Activated T-helper 2 cell treated with anti-CD3 and anti-CD28 coated beads, Interferon-gamma antibody, Interleukin-2, Interleukin-4, amounts not matched to agents 10 μg/mL and 5 μg/mL and 100 μg/mL, durations not matched to agents 14 hours and 24 hours and 36 hours (primary cell): ENCODE measurements at regions of chr2 and their contacts with region 1.

Region 1: DNA sequence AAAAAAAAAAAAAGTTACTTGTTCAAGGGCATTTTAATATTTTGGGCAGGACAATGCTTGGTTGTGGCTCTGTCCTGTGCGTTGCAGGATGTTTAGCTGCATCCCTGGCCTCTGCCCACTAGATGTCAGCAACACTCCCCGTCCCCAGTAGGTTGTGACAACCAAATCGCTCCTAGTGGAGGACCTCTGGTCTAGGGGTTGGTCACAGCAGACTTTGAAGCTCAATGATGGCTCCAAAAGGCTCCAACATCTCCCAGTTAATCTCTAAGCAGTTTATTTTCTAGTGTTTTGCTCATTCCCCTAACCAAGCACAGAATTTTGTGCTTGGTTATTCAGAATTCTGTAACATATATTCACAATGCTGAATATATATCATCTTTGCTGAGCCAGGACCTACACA is 67.0 kb downstream of the CHRNA1 start:
- DNase-seq: peak; percentile 48
- H3K4me3 Mint-ChIP-seq: no peak overlapping the region
- H3K27ac Mint-ChIP-seq: no peak overlapping the region
- H3K4me1 Mint-ChIP-seq: no peaks in the 10 kb centered on the region
- H3K27me3 Mint-ChIP-seq: peaks cover 26% of the 10 kb centered on the region

Region 2: GRCh38 chr2:174771631-174772471 is 74.6 kb after region 1 on chr2:
- intact Hi-C with region 1: loop called (anchors 1 kb)
- DNase-seq: no peak
- H3K4me3 Mint-ChIP-seq: no peak overlapping the region
- H3K27ac Mint-ChIP-seq: no peak overlapping the region
- H3K4me1 Mint-ChIP-seq: peaks cover 14% of the 10 kb centered on the region
- H3K27me3 Mint-ChIP-seq: peaks cover 2% of the 10 kb centered on the region

Region 3: DNA sequence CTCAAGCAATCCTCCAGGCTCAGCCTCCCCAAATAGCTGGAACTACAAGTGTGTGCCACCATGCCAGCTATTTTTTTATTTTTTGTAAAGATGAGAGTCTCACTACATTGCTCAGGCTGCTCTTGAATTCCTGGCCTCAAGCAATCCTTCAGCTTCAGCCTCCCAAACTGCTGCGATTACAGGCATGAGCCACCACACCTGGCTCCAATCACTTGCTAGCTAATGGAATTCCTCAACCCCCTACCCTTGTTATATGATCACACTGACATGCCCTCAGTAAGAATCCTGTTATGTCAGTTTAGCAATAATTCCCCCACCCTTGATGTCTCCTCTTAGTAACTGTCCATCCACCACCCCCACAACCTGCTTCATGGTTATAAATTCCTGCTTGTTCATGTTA is 295.6 kb after region 1 on chr2:
- intact Hi-C with region 1: loop called (anchors 5 kb)
- DNase-seq: no peak
- H3K4me3 Mint-ChIP-seq: no peak overlapping the region
- H3K27ac Mint-ChIP-seq: no peak overlapping the region
- H3K4me1 Mint-ChIP-seq: peaks cover 2% of the 10 kb centered on the region
- H3K27me3 Mint-ChIP-seq: peaks cover 9% of the 10 kb centered on the region

Region 4: DNA sequence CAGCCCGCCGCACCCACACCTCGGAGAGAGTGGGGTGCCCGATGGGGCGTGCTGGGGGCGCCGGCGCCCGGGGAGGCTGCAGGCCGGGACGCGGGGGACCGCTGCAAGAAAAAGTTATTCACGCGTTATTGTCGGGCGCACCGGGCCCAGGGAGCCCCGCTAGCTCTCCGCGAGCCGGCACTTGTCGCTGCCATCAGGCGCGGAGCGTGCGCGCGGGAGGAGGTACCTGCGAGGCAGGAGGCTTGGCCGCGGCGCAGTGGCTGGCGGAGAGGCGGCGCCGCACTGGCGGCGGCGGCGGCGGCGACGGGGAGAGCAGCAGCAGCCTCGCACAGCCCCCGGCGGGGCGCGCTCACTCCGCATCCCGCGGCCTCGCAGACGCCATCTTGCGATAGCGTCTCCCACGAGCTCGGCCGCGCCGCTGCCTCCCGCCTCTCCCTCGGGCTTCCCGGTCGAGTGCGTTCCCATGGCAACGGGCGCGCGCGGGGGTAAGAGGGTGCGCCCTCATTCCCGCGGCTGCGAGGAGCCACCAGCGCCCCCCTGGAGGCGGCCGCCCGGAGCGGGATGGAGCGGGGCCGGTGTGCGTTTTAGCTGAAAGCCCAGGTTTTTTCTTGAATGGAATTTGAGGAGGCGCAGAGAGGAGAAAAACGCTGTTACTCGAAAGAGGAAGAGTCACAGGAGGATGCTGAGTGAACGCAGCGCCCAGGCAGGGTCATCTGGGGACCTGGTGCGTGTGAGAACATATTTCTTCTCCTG is 307.9 kb after region 1 on chr2 and contains the start of gene CHN1:
- intact Hi-C with region 1: loop called (anchors 5 kb)
- DNase-seq: peak; percentile 46
- H3K4me3 Mint-ChIP-seq: peak within 1 kb of the TSS; percentile 80
- H3K27ac Mint-ChIP-seq: no peak within 1 kb of the TSS
- H3K4me1 Mint-ChIP-seq: peaks cover 2% of the 10 kb centered on the region
- H3K27me3 Mint-ChIP-seq: peaks cover 69% of the 10 kb centered on the region
- total RNA-seq, gene CHN1: 5.0 and 7.3 TPM in 2 replicates

Region 5: DNA sequence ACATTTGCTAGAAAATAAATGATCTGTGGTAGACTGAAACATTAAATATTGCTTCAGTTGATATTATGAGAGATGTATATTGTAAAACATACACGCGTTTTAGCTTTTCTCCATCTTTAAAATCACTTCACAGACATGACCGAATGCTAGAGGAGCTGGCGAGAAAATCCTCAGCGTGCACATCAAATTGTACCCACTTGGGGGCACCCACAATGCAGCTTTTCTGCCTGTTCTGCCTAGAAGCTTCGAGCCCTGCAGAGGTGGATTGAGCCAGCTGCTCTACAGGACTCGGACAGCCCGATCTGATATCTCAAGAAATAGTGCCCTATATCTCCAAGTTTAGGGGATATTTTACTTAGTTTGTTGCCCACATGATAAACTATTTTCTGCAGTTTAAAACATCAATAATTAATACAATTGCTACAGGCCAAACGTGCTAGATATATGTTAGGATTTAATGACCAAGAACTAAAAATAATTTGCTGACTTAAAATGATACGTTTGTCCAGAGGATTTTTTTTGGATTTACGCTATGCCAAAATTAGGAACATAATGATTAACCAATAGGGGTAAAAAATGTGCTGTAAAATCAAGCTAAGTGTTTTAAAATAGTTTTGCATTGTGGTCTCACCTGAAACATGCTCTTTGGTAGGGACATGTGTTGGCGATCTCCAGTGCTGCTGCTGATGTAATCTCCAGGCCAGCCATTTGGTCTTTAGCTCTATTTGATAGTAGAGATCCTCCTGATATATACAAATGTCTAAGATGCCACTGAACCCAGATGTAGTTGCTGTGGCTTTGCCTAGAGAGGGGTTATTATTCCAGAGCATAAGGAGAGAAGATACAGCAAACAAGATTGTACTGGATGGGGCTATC is 506.6 kb after region 1 on chr2:
- intact Hi-C with region 1: loop called (anchors 5 kb)
- DNase-seq: peak; percentile 22
- H3K4me3 Mint-ChIP-seq: no peak overlapping the region
- H3K27ac Mint-ChIP-seq: no peak overlapping the region
- H3K4me1 Mint-ChIP-seq: peaks cover 8% of the 10 kb centered on the region
- H3K27me3 Mint-ChIP-seq: peaks cover 13% of the 10 kb centered on the region

Region 6: DNA sequence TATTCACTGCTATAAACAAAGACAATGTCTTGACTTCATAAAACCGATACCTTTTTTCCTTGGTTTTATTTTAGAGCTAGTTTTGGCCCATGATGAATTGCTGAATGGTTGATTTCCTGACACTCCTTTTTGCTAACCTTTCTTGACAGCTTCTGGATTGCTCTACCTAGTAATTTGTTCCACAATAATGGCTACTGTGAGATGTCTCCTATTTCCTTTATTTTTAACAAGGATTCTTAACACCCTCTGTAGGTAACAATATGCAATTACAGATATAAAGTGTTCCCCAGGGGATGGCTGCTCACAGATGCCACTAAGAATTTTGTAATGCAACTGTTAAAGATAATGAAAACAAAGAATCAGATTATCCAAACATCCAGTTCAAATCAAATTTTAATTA is 585.0 kb after region 1 on chr2:
- intact Hi-C with region 1: loop called (anchors 5 kb)
- DNase-seq: no peak
- H3K4me3 Mint-ChIP-seq: no peak overlapping the region
- H3K27ac Mint-ChIP-seq: no peak overlapping the region
- H3K4me1 Mint-ChIP-seq: peaks cover 2% of the 10 kb centered on the region
- H3K27me3 Mint-ChIP-seq: peaks cover 18% of the 10 kb centered on the region